ENCODE measurements at regions of chr6 and their contacts with region 1.

Region 1: DNA sequence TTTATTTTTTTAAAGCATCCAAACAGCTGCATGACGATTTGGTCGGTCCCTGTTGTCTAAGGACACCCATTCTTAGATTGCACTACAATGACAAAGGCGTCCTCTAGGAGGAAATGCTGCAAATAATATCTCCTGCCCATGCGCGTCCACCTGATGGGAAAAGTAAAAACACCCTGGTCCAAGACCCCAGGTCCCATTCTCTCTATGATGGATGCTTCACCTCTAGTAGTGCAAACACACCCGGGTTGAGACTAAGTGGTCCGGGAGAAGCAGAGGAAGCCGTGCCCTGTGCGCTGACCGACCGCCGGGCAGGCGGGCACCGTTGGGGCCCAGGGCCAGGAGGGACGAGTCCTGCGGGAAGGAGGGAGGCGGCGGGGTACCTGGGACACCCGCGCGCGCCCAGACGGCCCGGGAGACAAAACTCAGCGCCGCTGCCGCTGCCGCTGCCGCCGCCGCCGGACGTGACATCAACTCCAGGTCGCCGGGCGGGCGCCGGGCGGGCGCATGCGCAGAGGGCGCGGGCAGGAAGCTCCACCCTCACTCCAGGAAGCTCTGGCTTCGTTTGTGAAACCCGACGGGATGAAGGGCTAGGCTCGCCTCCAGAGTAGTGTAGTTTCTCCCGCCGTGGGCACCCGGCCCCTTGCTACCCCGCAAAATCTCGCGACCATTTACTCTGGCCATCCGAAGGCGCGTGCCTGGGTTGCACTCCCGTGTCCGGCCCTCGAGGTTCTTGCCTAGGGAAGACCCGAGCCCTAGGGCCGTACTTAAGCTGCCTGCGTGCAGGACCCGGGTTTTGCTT is at the start of gene TBC1D7:
- DNase-seq: peak; percentile 80 to 96
- H3K4me3 ChIP-seq: peak within 1 kb of the TSS; percentile 95
- H3K27ac ChIP-seq: peak within 1 kb of the TSS; percentile 69
- H3K4me1 ChIP-seq: peaks cover 22% of the 10 kb centered on the region
- H3K27me3 ChIP-seq: no peaks in the 10 kb centered on the region
- CTCF ChIP-seq: no peak
- total RNA-seq, gene TBC1D7: 29.2 and 30.4 TPM in 2 replicates

Region 2: DNA sequence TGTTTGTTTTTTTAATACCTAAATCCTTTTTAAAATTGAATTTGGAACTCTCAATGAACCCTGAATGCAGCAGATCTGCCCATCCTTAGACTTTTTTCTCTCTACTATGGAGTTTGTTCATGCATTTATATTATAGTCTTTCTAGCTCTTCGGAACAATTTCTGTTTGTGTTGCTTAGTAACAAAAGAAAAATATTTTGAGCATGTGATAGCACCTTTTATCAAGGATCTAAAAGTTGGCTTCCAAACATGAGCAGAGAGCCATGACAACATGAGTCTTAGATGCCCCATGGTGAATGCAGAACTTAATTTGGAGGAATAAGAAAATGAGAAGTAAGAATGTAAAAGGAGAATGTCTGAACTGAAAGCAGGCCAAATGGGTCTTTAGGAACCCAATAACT is 904.4 kb before region 1 on chr6:
- CTCF ChIA-PET with region 1: no interaction called
- POLR2A ChIA-PET with region 1: no interaction called
- intact Hi-C with region 1: no loop called
- DNase-seq: no peak
- H3K4me3 ChIP-seq: no peak overlapping the region
- H3K27ac ChIP-seq: no peak overlapping the region
- H3K4me1 ChIP-seq: no peaks in the 10 kb centered on the region
- H3K27me3 ChIP-seq: no peaks in the 10 kb centered on the region
- CTCF ChIP-seq: no peak

Region 3: DNA sequence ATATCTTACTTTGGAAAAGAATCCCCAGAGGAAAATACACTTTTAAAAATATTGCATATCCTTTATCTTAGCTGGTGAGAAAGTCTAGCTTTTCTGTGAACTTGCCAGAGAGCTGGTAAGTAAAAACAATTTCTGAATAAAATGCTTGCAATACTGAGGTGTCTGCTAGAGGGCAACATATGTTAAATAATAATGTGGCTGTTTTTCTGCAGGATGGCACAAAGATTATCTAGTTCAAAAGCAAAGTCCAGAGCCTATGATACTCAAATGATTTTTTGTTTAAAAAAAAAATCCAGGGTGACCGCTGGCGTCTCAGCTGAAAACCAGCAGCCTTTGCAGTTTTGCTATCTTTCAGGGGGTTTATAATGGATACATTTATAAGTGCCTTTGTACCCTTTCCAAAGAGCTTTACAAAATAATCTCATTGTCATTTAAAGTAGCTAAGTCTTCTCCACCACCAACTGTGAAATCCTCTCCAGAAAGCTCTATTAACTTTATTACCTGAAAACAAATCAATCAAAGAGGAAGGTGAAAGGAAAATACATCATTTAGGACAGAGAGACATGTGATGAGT is 416.8 kb before region 1 on chr6:
- CTCF ChIA-PET with region 1: no interaction called
- POLR2A ChIA-PET with region 1: no interaction called
- intact Hi-C with region 1: loop called (anchors 2 kb)
- DNase-seq: no peak
- H3K4me3 ChIP-seq: no peak overlapping the region
- H3K27ac ChIP-seq: no peak overlapping the region
- H3K4me1 ChIP-seq: no peaks in the 10 kb centered on the region
- H3K27me3 ChIP-seq: peaks cover 68% of the 10 kb centered on the region
- CTCF ChIP-seq: peak; percentile 55

Region 4: GRCh38 chr6:13194852-13195251 is 133.4 kb before region 1 on chr6:
- CTCF ChIA-PET with region 1: interaction called, 3 read pairs
- POLR2A ChIA-PET with region 1: no interaction called
- intact Hi-C with region 1: loop called (anchors 2 kb)
- DNase-seq: peak in 1 of 2 experiments; percentile 21
- H3K4me3 ChIP-seq: no peak overlapping the region
- H3K27ac ChIP-seq: no peak overlapping the region
- H3K4me1 ChIP-seq: no peaks in the 10 kb centered on the region
- H3K27me3 ChIP-seq: peaks cover 36% of the 10 kb centered on the region
- CTCF ChIP-seq: no peak; the same call in 1 of the 2 replicates

Region 5: GRCh38 chr6:13229205-13230085 is 98.8 kb before region 1 on chr6:
- CTCF ChIA-PET with region 1: no interaction called
- POLR2A ChIA-PET with region 1: no interaction called
- intact Hi-C with region 1: loop called (anchors 1 kb)
- DNase-seq: peak; percentile 28 to 49
- H3K4me3 ChIP-seq: no peak overlapping the region
- H3K27ac ChIP-seq: no peak overlapping the region
- H3K4me1 ChIP-seq: no peaks in the 10 kb centered on the region
- H3K27me3 ChIP-seq: peaks cover 59% of the 10 kb centered on the region
- CTCF ChIP-seq: peak; percentile 62

Region 6: DNA sequence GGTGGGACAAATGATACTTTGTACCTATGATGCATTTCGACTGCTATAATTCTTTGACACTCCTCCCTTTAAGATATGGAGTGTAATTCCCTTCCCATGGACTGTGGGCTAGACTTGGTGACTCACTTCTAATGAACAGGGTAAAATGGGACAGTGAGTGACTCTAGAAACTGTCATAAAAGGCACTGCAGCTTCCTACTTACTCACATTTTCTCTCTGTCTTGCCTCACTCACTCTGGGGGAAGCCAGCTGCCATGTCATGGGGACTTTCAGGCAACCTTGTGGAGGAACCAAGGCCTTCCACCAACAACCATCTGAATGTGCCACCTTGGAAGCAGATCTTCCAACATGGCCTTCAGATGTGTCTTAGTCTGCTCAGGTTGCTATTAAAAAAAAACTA is 172.0 kb after region 1 on chr6:
- CTCF ChIA-PET with region 1: no interaction called
- POLR2A ChIA-PET with region 1: no interaction called
- intact Hi-C with region 1: no loop called
- DNase-seq: no peak
- H3K4me3 ChIP-seq: no peak overlapping the region
- H3K27ac ChIP-seq: no peak overlapping the region
- H3K4me1 ChIP-seq: peaks cover 10% of the 10 kb centered on the region
- H3K27me3 ChIP-seq: no peaks in the 10 kb centered on the region
- CTCF ChIP-seq: no peak

Region 7: GRCh38 chr6:13526727-13527670 is 198.7 kb after region 1 on chr6:
- CTCF ChIA-PET with region 1: interaction called, 10 read pairs
- POLR2A ChIA-PET with region 1: no interaction called
- intact Hi-C with region 1: no loop called
- DNase-seq: no peak
- H3K4me3 ChIP-seq: no peak overlapping the region
- H3K27ac ChIP-seq: no peak overlapping the region
- H3K4me1 ChIP-seq: peaks cover 20% of the 10 kb centered on the region
- H3K27me3 ChIP-seq: no peaks in the 10 kb centered on the region
- CTCF ChIP-seq: no peak

Region 8: DNA sequence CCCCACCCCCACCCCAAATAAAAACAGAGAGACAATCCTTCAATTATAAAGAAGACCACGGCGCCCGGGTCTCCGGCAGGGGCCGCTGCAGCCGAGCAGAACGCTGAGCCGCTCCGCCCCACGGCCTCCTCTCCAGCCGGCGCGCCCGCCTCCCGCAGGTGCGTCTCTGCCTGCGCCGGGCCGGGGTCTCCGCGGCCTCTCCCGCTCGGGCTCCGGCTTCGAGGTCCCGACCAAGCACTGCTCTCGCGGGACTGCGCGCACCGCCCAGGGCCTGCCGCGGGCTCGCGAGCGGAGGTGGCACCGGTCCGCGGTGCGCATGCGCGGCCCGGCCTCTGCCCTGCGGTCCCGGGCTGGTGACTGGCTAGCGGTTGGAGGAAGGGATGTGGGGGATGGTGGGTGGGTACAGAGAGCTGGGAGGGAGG is 245.9 kb after region 1 on chr6:
- CTCF ChIA-PET with region 1: interaction called, 6 read pairs
- POLR2A ChIA-PET with region 1: interaction called, 8 read pairs
- intact Hi-C with region 1: loop called (anchors 2 kb)
- DNase-seq: peak; percentile 80 to 96
- H3K4me3 ChIP-seq: peak overlapping the region; percentile 92
- H3K27ac ChIP-seq: peak overlapping the region; percentile 96
- H3K4me1 ChIP-seq: peaks cover 17% of the 10 kb centered on the region
- H3K27me3 ChIP-seq: no peaks in the 10 kb centered on the region
- CTCF ChIP-seq: peak; percentile 52

Measured in PC-9 (cell line).